GM10248 (cell line): ENCODE measurements at regions of chr3 and their contacts with region 1.

Region 1: DNA sequence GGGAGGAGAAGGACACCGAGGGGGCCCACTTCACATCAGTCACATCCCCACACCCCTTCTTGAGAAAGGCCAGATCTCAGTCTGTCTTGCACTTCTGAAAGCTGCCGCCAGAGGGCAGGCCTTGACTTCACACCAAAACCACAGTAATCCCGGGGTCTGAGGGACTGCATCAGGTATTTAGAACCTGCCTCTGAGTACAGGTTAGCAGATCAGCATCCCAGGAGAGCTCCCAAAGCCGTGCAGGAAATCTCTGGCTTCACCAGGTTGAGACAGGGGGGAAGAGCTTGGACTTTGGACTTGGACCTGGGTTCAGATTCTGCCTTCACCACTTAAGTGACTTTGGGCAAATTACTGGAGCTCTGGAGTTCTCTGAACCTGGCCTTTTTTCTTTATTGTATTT is 50.3 kb downstream of the LHFPL4 start:
- DNase-seq: peak; percentile 78
- CTCF ChIP-seq: peak; percentile 90

Region 2: DNA sequence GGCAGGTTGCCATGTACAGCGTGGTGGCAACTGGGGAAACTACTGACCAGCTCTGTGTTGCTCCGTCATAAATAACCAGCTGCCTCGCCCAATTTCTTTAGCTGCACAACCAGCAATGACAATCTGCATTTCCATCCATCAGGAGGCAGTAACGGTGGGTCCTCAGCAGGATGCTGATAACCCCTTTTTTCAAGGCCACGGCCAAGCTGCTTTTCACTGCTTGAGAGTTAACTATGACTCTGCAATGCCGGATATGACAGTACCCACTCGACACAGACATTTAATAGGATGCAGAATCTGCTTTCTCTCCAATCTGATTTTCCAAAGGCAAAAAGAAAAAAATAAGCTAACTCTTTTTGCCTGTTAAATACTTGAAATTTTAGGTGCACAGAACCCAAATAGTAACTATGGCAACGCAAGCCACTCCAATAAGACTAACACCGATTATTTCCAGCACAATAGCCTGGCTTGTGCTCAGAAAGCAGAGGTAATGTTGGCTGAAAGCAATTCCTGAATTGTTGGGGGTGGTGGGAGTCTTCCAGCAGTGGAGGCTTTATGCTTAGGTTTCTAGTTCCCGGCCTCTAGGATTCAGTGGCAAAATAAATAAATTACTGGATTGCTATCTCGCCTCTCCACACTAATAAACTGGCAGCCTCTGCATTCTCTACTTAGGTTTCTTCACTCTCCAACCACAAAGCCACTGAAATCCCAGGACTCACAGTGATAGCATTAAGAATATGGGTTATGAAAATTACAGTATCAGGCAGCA is 222.6 kb before region 1 on chr3:
- CTCF ChIA-PET with region 1: no interaction called
- POLR2A ChIA-PET with region 1: no interaction called
- DNase-seq: no peak
- CTCF ChIP-seq: no peak

Region 3: GRCh38 chr3:9491506-9491905 is 11.8 kb before region 1 on chr3:
- CTCF ChIA-PET with region 1: interaction called, 22 read pairs
- POLR2A ChIA-PET with region 1: interaction called, 4 read pairs
- DNase-seq: no peak
- CTCF ChIP-seq: no peak